ENCODE measurements at regions of chr14 and their contacts with region 1.

Region 1: DNA sequence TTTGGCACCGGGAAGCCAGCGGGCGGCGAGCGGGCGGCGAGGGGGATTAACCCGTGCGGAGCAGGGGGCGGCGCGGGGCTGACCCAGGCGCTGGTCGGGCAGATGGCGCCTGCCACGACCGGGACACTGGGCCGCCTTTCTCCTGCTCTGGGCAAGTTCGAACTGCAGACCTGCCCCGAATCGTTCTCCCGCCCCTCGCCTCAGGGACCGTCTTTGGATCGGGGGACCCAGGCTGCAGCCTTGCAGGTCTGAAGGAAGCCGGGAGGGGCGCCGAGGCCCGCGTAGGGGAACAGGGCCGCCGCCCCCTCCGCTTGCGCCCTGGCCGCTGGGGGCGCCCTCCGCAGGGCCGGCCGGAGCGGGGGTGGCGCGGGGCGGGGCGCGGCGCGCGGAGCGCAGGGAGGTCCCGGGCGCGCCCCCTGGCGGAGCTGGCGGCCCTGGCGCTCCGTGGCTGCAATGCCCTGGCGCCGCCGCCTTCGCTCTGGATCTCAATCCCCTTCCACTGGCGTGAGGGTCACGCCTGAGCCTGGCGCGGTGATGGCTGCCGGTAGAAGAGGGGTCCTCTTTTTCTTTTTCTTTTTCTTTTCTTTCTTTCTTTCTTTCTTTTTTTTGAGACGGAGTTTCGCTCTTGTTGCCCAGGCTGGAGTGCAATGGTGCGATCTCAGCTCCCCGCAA is 449 bp upstream of the LTBP2 start:
- DNase-seq: peak; percentile 91
- ATAC-seq: peak; percentile 86
- H3K4me3 Mint-ChIP-seq: peak overlapping the region; percentile 62
- H3K27ac Mint-ChIP-seq: no peak overlapping the region
- H3K4me1 Mint-ChIP-seq: peaks cover 25% of the 10 kb centered on the region
- H3K27me3 Mint-ChIP-seq: peaks cover 15% of the 10 kb centered on the region

Region 2: DNA sequence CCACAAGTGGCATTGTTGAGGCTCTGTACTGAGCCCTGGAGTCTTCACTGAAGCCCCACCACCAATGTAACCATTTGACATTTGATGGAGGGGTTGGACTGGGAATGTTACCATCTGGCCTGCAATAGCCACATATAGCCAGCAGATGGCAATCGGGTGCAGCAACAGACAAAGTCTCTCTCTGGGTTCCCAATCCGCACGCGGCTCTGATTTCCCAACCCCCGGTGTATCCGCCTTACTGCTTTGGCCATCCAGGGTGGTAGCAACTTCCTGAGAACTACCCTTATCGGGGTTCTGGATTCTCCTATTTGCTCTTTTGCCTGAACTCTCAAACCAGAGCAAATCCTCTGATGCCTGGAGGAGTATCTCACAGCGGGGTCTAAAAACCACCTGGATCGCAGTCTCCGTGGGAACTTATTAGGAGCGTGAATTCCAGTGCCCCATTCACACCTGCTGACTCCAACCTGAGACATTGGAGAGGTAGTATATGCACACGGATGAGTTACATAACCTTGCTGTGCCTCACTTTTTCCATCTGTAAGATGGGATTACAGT is 250.0 kb before region 1 on chr14:
- CTCF ChIA-PET with region 1: no interaction called
- POLR2A ChIA-PET with region 1: no interaction called
- intact Hi-C with region 1: loop called (anchors 1 to 2 kb)
- DNase-seq: peak; percentile 80
- ATAC-seq: peak; percentile 79
- H3K4me3 Mint-ChIP-seq: no peak overlapping the region
- H3K27ac Mint-ChIP-seq: no peak overlapping the region
- H3K4me1 Mint-ChIP-seq: no peaks in the 10 kb centered on the region
- H3K27me3 Mint-ChIP-seq: peaks cover 9% of the 10 kb centered on the region

Region 3: DNA sequence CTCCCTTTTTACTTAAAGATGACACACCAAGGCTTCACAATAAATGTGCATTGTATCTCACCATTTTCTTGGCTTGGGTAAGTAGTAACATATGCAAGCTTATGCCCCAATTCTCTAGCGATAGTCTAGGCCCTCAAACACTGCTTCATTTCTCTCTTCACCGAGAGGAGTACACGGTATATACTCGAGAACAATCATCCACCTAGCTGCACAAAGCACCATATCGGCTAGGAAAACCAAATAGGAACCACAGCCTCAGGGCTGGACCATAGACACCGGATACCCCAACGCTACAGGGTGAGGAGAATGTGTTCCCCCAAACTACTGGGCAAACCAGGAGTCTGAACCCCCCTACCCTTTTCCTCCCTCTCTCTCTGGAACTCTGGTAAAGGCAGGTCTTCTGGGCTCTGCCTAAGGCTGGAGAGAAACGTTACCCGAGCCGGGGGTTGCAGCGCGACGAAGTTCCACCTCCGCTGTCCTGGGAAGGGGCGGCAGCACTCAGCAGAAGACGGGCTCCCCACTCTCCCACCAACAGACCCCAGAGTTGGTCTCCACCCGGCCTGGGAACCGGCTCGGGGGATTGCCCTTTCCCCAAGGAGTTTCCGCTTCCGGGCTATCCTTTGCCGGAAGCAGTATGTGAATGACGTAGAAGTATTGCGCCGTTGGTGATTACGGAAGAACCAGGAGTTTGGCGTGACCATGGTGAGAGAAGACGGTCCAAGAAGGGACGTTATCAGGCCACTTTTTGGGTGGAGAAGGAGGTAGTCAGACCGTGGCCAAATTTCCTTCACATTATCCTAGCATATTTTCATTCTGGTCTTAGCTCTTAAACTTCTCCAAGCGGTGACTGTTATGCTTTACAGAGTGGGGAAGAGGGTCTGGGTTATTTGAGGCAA is 100.3 kb after region 1 on chr14 and contains the starts of genes AREL1 and FCF1:
- CTCF ChIA-PET with region 1: interaction called, 8 read pairs
- POLR2A ChIA-PET with region 1: no interaction called
- intact Hi-C with region 1: loop called (anchors 1 to 5 kb)
- DNase-seq: peak; percentile 88
- ATAC-seq: peak; percentile 98
- H3K4me3 Mint-ChIP-seq: peak within 1 kb of the TSS; percentile 98
- H3K27ac Mint-ChIP-seq: peak within 1 kb of the TSS; percentile 98
- H3K4me1 Mint-ChIP-seq: peaks cover 50% of the 10 kb centered on the region
- H3K27me3 Mint-ChIP-seq: no peaks in the 10 kb centered on the region
- total RNA-seq, gene AREL1: 31.3 to 35.6 TPM
- total RNA-seq, gene FCF1: 87.7 to 112 TPM

Region 4: DNA sequence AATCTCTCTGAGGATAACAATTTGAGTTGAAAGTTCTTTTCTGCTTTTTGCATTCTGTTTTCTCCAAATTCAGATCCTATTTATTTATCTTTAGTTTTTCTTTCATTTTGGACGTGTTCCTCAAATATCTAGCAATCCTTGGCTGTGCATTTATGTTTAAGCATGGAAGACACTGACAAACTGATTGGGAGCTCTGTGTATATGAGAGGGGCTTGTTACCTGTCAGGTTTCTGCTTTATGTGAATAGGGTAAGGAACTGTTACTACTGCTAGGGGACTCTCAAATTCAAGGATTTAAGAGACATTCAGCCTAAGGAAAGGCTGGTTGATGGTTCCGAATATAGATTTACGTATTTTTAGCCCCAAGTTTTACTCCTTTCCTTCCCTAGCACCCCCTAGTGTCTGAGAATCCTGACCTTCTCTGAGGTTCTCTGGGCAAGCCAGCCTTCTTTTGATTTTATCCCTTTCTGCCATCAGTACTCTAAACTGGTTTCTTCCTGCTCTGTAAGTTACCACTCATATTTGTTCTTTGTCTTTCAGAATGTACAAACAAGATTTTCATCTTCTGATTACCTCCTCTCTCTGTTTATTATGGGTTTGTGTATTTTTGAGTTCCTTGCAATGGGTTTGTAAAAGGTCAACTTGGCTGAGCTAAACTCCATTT is 181.2 kb after region 1 on chr14:
- CTCF ChIA-PET with region 1: interaction called, 7 read pairs
- POLR2A ChIA-PET with region 1: no interaction called
- intact Hi-C with region 1: loop called in 1 of 2 experiments (anchors 2 kb)
- DNase-seq: peak; percentile 19
- ATAC-seq: peak; percentile 61
- H3K4me3 Mint-ChIP-seq: peak overlapping the region; percentile 48
- H3K27ac Mint-ChIP-seq: peak overlapping the region; percentile 82
- H3K4me1 Mint-ChIP-seq: peaks cover 43% of the 10 kb centered on the region
- H3K27me3 Mint-ChIP-seq: no peaks in the 10 kb centered on the region

Region 5: DNA sequence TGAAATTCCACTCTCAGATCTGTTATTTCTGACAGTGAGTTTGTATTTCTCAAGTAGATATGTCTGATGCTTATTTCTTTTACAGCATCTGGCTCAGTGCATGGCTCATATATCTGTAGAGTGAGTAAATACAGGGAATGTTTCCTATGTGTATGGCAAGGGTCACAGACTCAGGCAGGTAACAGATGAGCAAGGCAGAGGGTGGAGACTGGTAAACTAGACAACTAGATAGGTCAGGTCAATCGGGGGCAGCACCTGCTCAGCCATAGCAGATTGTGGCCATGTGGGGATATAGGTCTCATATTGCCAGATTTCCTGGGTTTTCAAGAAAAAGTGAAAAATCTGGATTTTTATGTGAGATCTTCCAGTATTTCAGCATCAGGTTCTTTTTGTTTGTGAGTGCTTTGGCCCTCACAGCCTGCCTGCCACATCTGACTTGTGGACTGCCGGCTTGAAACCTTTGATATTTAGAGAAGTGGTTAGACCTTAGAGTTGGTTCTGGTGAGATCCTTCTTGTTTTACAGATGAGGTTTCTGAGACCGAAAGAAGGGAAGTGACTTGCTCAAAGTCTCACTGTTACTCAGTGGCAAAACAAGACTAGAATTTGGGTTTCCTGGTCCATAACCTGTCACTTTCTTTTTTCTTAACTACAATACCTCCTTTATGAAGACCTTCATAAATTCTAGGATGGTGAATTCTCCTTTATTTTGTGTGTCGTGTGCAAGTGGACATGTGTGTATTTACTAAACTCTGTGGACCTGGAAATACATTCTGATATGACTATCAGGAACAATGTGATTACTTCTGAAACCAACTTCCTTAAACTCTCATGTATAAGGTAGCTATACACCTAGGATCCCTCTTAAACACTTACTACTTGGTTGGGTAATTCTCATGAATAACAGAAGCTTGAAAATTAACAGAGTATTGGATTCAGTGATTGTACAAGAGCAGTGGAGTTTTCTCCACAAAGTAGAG is 229.0 kb after region 1 on chr14:
- CTCF ChIA-PET with region 1: interaction called, 5 read pairs
- POLR2A ChIA-PET with region 1: no interaction called
- intact Hi-C with region 1: loop called in 1 of 2 experiments (anchors 2 kb)
- DNase-seq: peak; percentile 49
- ATAC-seq: peak; percentile 81
- H3K4me3 Mint-ChIP-seq: peak overlapping the region; percentile 24
- H3K27ac Mint-ChIP-seq: peak overlapping the region; percentile 80
- H3K4me1 Mint-ChIP-seq: peaks cover 59% of the 10 kb centered on the region
- H3K27me3 Mint-ChIP-seq: no peaks in the 10 kb centered on the region

Region 6: DNA sequence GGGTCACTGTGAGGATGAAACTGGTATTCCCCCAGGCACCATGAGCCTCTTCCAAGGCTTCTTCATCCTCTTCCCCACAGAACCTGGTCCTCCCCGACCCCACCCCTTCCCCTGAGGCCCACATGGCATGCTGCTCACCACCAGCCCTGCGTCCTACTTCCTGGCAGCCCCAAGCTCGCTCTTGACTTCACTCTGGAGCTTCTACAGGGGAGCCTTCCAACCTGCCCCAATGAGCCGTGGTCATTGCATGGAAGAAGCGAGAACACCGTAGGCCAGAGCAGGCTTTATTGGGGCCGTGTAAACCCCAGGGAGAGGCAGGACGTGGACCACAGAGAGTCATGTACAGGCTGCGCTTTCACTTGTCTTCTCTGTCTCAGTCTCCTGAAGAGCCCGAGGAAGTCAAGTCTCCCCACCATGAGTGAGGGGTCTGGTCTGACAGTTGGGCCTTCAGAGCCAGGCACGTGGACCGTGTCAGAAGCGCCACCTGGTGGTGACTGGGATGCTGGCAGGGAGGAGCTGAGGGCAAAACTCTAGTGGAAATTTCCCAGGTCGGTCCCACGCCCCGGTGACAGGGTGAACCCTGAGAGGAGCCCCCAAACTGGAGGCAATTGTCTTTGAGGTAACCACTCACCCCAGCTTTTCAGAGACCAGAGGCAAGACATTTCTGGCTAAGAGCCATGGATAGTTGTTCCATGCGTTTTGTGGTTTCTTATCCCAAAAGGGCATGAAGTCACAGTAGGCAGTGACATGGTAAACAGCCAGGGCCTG is 293.1 kb after region 1 on chr14:
- CTCF ChIA-PET with region 1: interaction called, 11 read pairs
- POLR2A ChIA-PET with region 1: no interaction called
- intact Hi-C with region 1: loop called in 1 of 2 experiments (anchors 2 kb)
- DNase-seq: peak; percentile 88
- ATAC-seq: peak; percentile 79
- H3K4me3 Mint-ChIP-seq: no peak overlapping the region
- H3K27ac Mint-ChIP-seq: peak overlapping the region; percentile 63
- H3K4me1 Mint-ChIP-seq: no peaks in the 10 kb centered on the region
- H3K27me3 Mint-ChIP-seq: no peaks in the 10 kb centered on the region